GM13976 (cell line): ENCODE measurements at regions of chr1 and their contacts with region 1.

Region 1: GRCh38 chr1:5514519-5515183 is 477.6 kb downstream of the NPHP4 start:
- DNase-seq: peak; percentile 87
- CTCF ChIP-seq: peak; percentile 99

Region 2: DNA sequence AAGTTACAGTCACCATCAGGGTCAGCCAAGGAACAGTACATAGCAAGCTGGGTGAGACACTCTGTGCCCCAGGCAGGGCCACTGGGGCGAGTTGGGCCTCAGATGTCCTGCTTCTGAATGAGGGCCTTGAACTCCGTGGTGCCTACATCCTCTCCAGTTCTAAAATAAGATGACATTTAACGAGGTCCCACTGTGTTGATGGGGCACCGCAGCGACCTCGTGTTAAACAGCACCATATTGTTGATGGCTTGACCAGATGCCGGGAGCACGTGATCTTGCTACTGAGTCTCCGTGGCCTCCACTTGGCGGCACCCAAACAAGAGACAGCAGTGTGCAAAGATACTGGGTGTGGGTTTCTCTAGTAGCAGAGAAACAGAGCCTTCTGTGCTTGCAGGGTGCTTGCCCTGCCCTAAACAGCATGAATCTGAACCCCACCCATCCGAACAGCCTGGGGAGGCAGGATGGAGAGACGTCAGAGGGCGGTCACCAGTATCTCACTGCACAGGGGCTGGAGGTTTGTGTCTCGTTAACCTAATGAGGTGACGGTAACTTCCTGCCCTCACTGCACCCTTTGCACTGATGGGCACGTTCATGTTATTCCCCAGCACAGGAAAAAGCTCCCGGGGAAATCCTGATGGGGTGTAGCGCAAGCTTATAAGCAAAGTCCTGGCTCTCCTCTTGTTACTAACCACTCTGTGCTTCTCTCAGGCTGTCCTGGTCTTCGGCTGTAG is 535.8 kb before region 1 on chr1:
- in situ Hi-C with region 1: no loop called
- DNase-seq: no peak
- CTCF ChIP-seq: no peak

Region 3: GRCh38 chr1:5394111-5394510 is 120.5 kb before region 1 on chr1:
- in situ Hi-C with region 1: no loop called
- DNase-seq: no peak
- CTCF ChIP-seq: no peak

Region 4: GRCh38 chr1:5915587-5916571 is 401.2 kb after region 1 on chr1:
- in situ Hi-C with region 1: loop called (anchors 25 kb)
- DNase-seq: peak; percentile 79
- CTCF ChIP-seq: peak; percentile 69